Ovary (tissue), 10 donors: ENCODE measurements at regions of chr7 and their contacts with region 1.

Region 1: DNA sequence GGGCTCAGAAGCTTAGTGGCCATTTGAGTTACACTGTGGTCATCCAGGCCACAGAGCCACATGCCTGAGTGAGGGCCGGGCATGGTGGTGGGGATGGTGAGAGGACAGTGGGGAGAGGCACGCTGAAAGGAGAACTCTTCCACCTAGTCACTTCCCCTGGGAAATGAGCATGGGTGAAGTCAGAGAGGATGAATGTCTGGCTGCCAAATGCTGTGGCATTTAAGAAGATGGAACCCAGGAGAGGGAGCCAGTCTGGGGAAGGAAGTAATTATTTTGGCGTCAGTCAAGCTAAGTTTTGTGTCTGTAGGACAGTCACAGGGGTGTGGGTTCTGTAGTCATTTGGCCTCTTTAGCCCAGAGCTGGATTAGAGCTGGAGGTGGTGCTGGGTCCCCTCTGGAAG is 86.0 kb upstream of the PODXL start:
- DNase-seq: no peak
- H3K4me3 ChIP-seq: no peak overlapping the region
- H3K27ac ChIP-seq: no peak overlapping the region
- H3K4me1 ChIP-seq: no peaks in the 10 kb centered on the region
- H3K27me3 ChIP-seq: no peaks in the 10 kb centered on the region
- CTCF ChIP-seq: no peak
- EP300 ChIP-seq: no peak
- POLR2A ChIP-seq: no peak

Region 2: DNA sequence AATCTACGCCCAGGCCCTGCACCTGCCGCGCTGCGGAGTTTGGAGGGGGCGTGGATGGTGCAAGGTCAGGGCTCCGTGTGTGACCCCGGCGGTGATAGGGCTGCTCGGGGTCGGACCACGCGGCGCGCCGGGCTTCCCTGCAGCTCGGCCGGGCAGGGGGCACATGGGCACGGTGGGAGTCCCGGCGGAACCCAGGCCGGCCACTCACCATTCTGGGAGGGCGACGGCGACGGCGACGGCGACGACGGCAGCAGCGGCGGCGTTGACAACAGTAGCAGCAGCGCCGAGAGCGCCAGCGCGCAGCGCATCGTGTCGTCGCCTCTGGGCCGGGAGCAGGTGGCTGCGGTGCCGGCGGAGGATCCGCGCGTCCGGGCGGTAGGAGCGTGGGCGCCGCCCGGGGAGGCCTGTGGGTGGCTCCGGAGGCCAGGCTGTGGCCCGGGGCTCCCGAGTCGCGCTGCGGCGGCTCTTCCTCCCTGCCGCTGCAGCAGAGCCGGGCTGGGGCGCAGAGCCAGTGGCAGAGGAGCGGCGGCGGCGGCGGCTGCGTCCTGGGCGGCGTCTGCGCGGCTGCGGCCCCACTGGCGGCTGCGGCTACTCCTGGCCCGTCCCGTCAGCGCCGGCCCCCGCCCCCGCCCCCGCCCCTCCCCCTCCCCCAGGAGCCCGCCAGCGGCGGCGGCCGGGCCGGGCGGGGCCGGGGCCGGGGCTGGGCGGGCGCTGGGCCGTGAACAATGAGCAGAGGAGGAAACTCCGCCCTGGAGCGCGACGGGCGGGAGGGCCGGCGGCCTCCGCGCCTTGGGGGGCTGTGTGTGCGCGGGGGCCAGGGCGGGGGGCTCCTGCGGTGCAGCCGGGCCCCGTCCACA is 86.1 kb before region 1 on chr7 and contains the start of gene PODXL:
- intact Hi-C with region 1: loop called in 1 of 4 experiments (anchors 5 kb)
- DNase-seq: peak; percentile 65 to 79 (median 70)
- H3K4me3 ChIP-seq: peak within 1 kb of the TSS; percentile 65
- H3K27ac ChIP-seq: peak within 1 kb of the TSS in 1 of 2 donors; percentile 30
- H3K4me1 ChIP-seq: peaks cover 8% of the 10 kb centered on the region
- H3K27me3 ChIP-seq: no peaks in the 10 kb centered on the region
- CTCF ChIP-seq: no peak
- EP300 ChIP-seq: no peak
- POLR2A ChIP-seq: no peak
- total RNA-seq, gene PODXL: 15.9 to 85.1 (median 34.8) TPM

Region 3: GRCh38 chr7:131745390-131746248 is 103.2 kb after region 1 on chr7:
- intact Hi-C with region 1: no loop called
- DNase-seq: peak in 2 of 5 donors; percentile 13 to 63
- H3K4me3 ChIP-seq: no peak overlapping the region
- H3K27ac ChIP-seq: no peak overlapping the region
- H3K4me1 ChIP-seq: no peaks in the 10 kb centered on the region
- H3K27me3 ChIP-seq: no peaks in the 10 kb centered on the region
- CTCF ChIP-seq: no peak
- EP300 ChIP-seq: no peak
- POLR2A ChIP-seq: no peak